GM13976 (cell line): ENCODE measurements at regions of chr4 and their contacts with region 1.

Region 1: GRCh38 chr4:84966383-84967242 is at the start of gene WDFY3:
- DNase-seq: peak; percentile 63
- CTCF ChIP-seq: no peak

Region 2: GRCh38 chr4:84726356-84726755 is 240.3 kb before region 1 on chr4:
- in situ Hi-C with region 1: loop called (anchors 25 kb)
- DNase-seq: no peak
- CTCF ChIP-seq: no peak

Region 3: DNA sequence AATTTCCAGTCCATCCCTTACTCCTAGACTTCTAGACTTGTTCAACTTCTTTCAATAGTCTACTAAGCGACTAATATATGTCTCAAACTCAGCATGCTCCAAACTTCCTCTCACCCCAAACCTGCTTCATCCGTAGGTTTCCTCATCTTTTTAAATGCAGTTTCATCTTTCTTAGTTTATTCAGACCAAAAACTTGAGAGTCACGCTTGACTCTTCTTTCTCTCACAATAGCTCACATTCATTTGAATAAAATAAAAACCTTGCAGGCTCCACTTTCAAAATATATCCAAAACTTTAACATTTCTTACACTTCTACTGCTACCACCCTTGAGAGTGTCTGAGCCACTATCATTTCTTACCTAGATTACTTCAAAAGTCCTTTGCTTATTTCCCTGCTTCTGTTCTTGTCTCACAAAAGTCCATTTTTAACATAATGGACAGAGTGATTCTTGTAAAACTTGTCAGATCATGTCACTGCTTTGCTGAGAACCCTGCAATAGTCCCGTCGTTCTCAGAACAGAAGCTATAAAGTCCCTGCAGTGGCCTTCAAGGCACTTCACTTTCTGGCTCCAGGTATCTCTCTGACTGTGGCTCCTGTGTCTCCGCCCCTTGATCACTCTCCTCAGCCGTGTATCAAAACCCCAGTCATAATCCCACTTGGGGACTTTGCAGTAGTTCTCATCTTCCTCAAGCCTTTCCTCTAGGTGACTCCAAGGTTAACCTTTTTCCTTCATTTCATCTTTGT is 675.9 kb after region 1 on chr4:
- in situ Hi-C with region 1: no loop called
- DNase-seq: peak; percentile 7
- CTCF ChIP-seq: no peak